ENCODE measurements at regions of chr1 and their contacts with region 1.

Region 1: DNA sequence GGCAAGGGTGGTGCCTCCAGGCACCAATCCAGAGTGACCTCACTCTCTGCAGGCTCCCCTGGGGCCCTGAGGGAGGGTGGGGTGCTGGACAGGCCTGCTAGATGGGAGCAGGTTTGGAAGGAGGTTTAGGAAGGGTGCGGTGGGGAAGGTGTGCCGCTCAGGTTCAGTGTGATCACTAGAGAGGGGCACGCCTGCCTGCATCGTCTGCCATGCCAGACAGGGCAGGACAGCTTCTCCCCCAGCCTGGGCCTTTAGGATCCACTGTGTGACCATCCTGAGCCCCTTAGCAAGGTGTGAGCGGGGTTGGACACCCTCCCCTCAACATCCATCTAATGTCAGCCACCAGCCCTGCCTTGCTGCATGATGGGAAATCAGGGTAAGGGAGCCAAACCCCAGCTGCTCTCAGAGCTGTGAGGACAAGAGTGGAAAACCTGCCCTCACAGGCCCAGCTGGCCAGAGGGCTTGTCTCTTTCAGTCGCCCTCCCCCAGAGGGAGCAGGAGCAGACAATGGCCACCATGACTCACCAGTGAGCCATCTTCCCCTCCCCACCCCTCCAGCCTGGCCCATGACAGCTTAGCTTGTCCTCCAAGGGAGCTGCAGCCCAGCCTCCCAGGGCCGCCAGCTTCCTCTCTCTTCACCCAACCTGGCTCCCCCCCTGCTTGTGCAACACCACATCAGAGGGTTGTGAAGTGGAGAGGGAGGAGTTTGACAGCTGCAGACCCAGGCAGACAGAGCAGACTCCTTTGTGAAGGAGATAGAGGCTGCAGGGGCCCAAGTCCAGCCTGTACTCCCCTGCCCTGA is 37.0 kb downstream of the NUAK2 start:
- DNase-seq: peak; percentile 78
- CTCF ChIP-seq: no peak

Region 2: GRCh38 chr1:204241050-204241449 is 1043.5 kb before region 1 on chr1:
- in situ Hi-C with region 1: no loop called
- DNase-seq: no peak
- CTCF ChIP-seq: no peak

Region 3: DNA sequence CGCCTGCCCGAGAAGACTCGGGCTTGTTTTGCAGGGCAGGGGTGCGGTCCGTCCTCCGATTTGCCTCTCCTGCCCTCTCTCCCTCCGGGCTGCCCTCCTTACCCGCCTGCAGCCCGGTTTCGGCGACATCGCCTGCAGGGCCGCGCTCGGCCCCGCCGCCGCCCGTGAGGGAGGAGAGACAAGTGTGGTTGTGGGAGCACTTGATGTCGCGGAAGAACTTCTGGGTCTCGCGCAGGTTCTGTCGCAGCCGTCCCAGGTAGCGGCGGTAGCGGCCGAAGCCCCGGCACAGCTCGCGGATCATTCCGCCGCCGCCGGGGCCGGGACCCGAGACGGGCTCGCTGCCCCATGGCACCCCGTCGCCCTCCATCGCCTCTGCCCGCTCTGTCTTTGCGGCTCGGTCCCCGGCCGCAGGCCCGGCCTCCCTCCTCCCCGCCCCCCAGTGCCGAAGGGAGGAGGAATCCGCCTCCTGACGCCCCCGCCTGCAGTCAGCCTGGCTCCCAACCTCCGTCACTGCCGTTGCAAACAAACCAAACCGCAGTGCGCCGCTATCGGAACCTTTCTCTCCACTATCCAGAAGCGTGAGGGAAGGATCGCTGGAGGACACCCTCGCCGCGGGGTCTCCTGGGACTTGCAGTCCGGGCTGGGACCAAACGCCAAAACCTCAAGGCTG is 73.2 kb before region 1 on chr1 and contains the start of gene DSTYK:
- in situ Hi-C with region 1: no loop called
- DNase-seq: peak; percentile 91
- CTCF ChIP-seq: no peak

Region 4: GRCh38 chr1:205321164-205321958 is 36.8 kb after region 1 on chr1 and contains the start of gene NUAK2:
- in situ Hi-C with region 1: loop called (anchors 5 kb)
- DNase-seq: peak; percentile 81
- CTCF ChIP-seq: peak; percentile 29

Region 5: DNA sequence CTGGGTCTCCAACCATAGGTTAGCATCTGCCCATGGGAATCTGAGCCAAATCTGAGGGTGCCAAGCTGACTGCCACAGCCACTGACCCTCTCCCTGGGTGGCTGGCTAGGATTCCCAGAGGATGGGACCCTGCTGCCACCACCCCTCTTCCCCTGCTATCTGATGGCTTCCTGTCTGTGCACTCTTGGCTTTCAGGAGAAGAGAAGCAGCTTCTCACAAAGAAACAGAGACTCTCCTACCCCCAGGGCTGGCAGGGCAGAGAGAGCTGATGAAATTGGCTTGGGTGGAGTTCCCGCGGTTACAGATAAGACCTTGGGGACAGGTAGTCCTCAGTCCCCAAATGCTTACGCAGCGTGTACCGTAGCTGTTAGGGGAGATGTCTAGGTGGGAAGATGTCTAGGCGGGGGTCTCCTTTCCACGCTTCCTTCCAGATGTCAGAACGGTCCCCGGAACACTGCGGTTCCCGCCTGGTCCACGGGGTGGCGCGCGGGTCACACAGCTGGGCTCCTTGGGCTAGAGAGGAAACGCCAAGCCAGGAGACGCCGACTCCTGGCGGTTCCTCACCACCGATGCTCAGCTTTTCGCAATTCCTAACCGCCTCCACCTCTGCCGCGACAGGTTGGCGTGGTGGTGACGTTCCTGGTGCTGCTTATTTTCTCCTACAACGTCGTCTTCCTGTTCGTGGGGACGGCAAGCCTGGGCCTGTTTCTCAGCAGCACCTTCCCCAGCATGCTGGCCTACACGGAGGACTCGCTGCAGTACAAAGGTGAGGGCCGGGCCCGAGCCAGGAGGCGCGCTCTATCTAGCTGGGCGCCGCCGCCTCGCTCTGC is 307.2 kb after region 1 on chr1:
- in situ Hi-C with region 1: no loop called
- DNase-seq: peak; percentile 84
- CTCF ChIP-seq: peak; percentile 99

Measured in GM13976 (cell line).